BJ (cell line): ENCODE measurements at regions of chr14 and their contacts with region 1.

Region 1: GRCh38 chr14:60317609-60318008 is 68.6 kb downstream of the PPM1A start:
- DNase-seq: no peak
- H3K4me3 ChIP-seq: no peak overlapping the region
- H3K27me3 ChIP-seq: peaks cover 6% of the 10 kb centered on the region
- CTCF ChIP-seq: no peak

Region 2: DNA sequence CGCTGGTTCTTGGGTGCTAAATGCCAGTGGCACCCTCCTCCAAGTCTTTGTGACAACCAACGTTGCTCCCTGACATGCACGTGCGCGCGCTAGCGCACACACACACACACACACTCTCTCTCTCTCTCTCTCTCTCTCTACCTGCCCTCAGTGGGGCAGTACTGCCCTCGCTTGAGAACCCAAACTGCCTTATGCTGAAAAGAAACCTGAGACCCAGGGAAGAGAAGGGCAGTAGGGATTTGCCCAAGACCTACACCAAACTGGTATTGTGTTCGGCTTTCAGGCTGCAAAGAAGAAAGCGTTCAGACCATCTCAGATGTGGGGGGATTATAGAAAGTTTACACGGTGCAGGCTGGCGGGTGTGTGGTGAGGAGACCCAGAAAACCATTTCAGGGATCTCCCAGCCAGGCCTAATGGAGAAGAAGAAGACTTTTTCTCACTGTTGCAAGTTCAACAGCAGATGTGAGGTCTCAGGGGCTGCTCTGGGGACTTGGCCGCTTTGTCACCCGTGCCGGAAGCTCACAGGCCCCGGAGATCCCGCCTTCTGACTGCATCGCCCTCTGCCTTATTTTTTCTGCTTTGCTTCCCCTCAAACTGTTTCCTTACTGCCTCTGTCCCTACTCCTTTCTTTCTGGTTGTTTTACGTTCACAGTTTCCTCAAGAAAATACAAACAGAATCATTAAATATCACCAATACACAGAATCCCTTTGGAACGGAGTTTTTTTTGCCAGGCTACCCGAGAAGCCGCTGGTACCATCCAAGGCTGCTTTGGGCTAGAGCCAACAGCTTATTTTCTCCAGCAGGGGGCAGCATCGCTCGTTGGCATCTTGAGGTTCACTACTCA is 13.8 kb after region 1 on chr14:
- CTCF ChIA-PET with region 1: interaction called, 11 read pairs
- POLR2A ChIA-PET with region 1: no interaction called
- DNase-seq: no peak
- H3K4me3 ChIP-seq: peak overlapping the region; percentile 7
- H3K27me3 ChIP-seq: peaks cover 11% of the 10 kb centered on the region
- CTCF ChIP-seq: peak; percentile 67

Region 3: DNA sequence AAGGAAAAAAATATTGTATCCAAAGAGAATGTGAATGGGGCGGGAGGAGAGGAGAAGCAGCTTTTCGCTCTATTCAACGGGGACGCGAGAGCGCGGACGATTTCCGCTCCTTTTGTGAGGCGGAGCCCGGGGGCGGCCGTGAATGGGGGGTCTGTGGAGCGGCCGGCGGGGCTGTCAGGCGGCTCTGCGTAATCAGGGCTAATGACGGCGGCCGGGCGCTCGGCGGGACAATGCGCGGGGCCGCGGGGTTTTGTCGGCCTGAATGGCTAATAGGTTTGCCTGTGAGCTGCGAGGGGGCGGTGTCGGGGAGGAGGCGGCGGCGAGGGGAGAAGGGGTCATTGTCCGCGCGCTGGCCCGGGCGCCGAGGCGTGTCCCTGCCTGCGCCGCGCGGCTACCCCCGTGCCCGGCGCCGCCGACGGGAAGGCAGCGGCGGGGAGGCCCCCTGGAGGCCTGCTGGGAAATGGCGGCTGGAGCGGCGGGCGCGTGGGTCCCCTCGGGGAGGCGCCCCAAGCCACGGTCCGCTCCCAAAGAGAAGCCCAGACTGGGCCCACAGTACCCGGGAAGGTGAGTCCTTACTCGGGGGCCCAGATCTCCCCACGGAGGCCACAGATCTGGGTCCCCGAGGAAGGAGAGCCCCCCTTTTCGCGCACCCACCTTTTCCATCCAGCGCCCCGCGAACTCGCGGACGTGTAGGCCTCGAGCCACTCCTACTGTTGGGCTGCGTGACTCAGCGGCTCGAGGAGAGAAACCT is 197.3 kb after region 1 on chr14:
- CTCF ChIA-PET with region 1: no interaction called
- POLR2A ChIA-PET with region 1: no interaction called
- DNase-seq: no peak
- H3K4me3 ChIP-seq: peak overlapping the region; percentile 38
- H3K27me3 ChIP-seq: peaks cover 43% of the 10 kb centered on the region
- CTCF ChIP-seq: no peak

Region 4: GRCh38 chr14:60656686-60657455 is 339.3 kb after region 1 on chr14:
- CTCF ChIA-PET with region 1: no interaction called
- POLR2A ChIA-PET with region 1: no interaction called
- DNase-seq: no peak
- H3K4me3 ChIP-seq: peak overlapping the region; percentile 57
- H3K27me3 ChIP-seq: peaks cover 2% of the 10 kb centered on the region
- CTCF ChIP-seq: peak; percentile 64